Activated CD8-positive, alpha-beta T cell treated with anti-CD3 and anti-CD28 coated beads for 36 hours (primary cell): ENCODE measurements at regions of chr21 and their contacts with region 1.

Region 1: DNA sequence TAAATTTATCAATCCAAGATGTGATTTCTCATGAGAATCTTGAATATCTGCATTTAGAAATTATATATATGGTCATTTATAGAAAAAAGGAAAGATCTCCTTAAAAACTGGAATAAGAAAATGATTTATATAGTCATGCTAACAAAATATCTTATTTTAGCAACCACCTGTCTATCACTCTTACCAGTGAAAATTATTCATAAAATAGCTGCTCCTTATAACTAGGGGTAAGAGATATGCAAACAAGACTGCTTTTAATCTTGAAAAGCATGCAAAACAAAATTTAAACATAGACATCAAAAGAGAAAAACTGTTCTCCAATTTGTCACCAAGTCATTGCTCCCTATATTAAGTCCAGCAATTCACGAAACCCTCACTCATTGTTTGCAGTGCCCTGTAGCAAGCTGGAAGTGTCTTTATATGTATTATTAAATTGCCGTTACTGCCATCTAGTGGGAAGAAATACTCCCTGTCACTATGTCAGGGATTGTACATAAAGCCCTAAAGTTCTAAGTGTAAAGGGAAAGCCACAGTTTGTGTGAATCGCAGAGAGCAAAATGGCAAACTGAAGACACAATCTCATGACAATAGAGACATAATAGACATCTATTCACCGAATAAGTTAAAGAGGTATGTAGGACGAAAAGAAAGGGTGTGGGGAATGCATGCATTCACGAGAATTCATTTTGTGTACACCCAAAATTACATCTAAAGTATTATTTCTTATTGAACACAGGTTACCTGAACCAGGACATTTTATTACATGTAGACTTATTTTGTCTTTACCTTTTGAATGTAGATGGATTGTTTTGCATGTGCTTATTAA is 600.5 kb downstream of the USP25 start:
- DNase-seq: peak; percentile 9
- ATAC-seq: peak; percentile 70
- H3K4me3 Mint-ChIP-seq: no peak overlapping the region
- H3K27ac Mint-ChIP-seq: no peak overlapping the region
- H3K4me1 Mint-ChIP-seq: no peaks in the 10 kb centered on the region
- H3K27me3 Mint-ChIP-seq: no peaks in the 10 kb centered on the region
- CTCF ChIP-seq: peak; percentile 66

Region 2: GRCh38 chr21:16082038-16082816 is 248.1 kb before region 1 on chr21:
- CTCF ChIA-PET with region 1: interaction called, 13 read pairs
- POLR2A ChIA-PET with region 1: no interaction called
- intact Hi-C with region 1: loop called (anchors 10 kb)
- DNase-seq: no peak
- ATAC-seq: no peak
- H3K4me3 Mint-ChIP-seq: no peak overlapping the region
- H3K27ac Mint-ChIP-seq: no peak overlapping the region
- H3K4me1 Mint-ChIP-seq: no peaks in the 10 kb centered on the region
- H3K27me3 Mint-ChIP-seq: no peaks in the 10 kb centered on the region
- CTCF ChIP-seq: peak; percentile 57

Region 3: DNA sequence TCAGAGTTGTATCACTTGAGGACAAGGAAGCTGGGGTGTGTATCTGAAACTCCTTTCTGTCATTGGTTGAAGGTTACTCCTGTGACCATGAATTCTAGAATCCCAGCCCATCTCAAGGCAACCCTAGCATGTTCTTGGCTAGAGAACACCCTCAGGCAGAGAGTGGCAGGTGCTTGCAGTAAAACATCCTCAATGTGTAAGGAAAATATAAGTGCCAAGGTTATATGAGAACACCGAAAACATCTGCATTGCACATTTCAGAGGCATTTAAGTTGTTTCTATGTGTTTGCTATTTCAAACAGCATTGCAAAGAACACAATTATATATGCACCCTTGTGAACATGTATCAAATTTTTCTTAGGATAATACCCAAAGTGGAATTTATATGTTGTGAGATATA is 128.6 kb before region 1 on chr21:
- CTCF ChIA-PET with region 1: no interaction called
- POLR2A ChIA-PET with region 1: no interaction called
- intact Hi-C with region 1: no loop called
- DNase-seq: no peak
- ATAC-seq: no peak
- H3K4me3 Mint-ChIP-seq: no peak overlapping the region
- H3K27ac Mint-ChIP-seq: no peak overlapping the region
- H3K4me1 Mint-ChIP-seq: no peaks in the 10 kb centered on the region
- H3K27me3 Mint-ChIP-seq: peaks cover 3% of the 10 kb centered on the region
- CTCF ChIP-seq: no peak

Region 4: DNA sequence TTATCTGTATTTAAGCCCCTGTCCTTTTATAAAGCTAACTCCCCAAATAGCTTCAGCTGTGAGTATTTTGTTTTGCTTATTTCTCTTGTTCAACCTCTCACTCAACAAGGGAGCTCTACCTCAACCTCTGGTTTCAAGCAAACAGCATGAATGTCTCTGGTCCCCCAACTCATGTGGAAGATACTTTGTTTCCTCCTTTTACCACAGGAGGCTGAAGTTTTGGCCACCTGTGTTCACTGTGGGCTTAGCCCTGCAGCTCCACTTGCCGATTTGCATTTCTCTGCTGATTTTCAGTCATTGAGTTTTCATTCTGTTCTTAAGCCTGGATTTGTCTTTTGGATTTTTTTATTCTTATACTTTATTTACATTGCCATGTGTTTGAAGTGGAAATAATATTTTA is 12.6 kb after region 1 on chr21:
- CTCF ChIA-PET with region 1: interaction called, 14 read pairs
- POLR2A ChIA-PET with region 1: no interaction called
- intact Hi-C with region 1: no loop called
- DNase-seq: no peak
- ATAC-seq: no peak
- H3K4me3 Mint-ChIP-seq: no peak overlapping the region
- H3K27ac Mint-ChIP-seq: no peak overlapping the region
- H3K4me1 Mint-ChIP-seq: no peaks in the 10 kb centered on the region
- H3K27me3 Mint-ChIP-seq: no peaks in the 10 kb centered on the region
- CTCF ChIP-seq: no peak